ENCODE measurements at regions of chr19 and their contacts with region 1.

Region 1: DNA sequence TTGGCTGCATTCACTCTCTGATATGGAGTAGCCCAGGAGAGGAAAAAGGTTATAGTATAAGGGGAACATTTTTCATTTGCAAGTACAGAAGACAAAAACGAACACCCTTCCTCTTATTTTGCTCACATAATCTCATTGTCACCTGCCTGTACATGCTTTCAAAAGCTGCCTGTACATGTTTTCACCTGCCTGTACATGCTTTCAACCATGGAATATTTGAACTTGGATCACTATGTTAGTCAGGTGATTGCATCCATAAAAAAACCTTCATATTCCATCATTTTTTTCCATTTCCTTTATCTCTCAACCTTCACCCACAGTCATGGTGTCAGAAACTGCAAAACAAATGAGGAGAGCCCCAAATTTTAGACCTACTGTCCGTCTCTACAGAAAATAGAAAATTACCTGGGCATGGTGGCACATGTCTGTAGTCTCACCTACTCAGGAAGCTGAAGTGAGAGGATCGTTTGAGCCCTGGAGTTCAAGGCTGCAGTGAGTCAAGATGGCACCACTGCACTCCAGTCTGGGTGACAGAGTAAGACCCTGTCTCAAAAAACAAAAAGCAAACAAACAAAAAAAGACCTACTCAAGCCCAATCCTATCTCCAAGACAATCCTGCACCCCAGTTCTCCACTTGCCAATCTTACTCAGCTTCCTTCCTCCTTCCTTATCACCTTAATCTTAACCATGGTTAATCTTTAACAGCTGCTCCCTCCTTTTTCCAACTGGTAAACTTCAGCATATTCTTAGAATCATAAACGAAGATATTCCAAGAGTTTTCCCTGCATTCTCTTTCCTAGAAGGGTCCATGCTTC is 11.6 kb downstream of the IGFL2 start:
- DNase-seq: no peak
- ATAC-seq: no peak
- H3K4me3 ChIP-seq: no peak overlapping the region
- H3K27ac ChIP-seq: no peak overlapping the region
- H3K4me1 ChIP-seq: no peaks in the 10 kb centered on the region
- H3K27me3 ChIP-seq: no peaks in the 10 kb centered on the region; a peak in 1 of 4 replicates
- CTCF ChIP-seq: no peak
- EP300 ChIP-seq: no peak
- POLR2A ChIP-seq: no peak
- RAD21 ChIP-seq: no peak

Region 2: DNA sequence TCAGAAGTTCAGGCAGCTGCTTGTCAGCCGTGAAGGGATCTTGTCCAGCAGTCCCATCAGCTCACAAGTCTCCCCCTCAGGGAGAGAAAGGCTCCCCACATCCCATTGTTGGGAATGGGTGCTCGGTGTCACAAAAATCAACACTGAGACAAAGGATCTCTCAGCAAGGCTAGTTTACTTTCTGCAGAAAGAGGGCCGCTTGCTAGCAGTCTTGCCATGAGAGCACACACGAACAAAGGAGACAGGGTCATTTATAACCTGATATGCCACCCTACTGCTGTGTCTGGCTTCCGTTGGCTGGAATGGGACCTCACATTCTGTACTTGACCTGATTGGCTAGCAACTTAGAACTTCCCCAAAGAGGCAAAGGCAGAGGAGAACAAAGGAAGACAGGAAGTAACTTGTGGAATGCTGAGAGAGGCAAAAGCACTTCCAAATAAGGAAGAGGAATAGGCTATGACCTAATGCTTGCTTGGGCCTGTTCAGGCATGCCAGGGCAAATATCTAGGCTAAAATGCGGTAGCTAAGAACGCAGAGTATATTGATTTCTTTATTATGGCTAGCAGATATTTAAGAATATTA is 26.4 kb before region 1 on chr19:
- CTCF ChIA-PET with region 1: no interaction called
- POLR2A ChIA-PET with region 1: no interaction called
- RAD21 ChIA-PET with region 1: no interaction called
- SMC1A ChIA-PET with region 1: no interaction called
- in situ Hi-C with region 1: no loop called
- intact Hi-C with region 1: no loop called
- DNase-seq: peak; percentile 24
- ATAC-seq: no peak
- H3K4me3 ChIP-seq: no peak overlapping the region
- H3K27ac ChIP-seq: no peak overlapping the region; the same call in 1 of the 2 replicates
- H3K4me1 ChIP-seq: peaks cover 3% of the 10 kb centered on the region; the same call in 1 of the 2 replicates
- H3K27me3 ChIP-seq: peaks cover 0 to under 1% of the 10 kb centered on the region in 2 experiments; a peak in 1 of 4 replicates
- CTCF ChIP-seq: no peak
- EP300 ChIP-seq: no peak
- POLR2A ChIP-seq: no peak
- RAD21 ChIP-seq: no peak

Region 3: DNA sequence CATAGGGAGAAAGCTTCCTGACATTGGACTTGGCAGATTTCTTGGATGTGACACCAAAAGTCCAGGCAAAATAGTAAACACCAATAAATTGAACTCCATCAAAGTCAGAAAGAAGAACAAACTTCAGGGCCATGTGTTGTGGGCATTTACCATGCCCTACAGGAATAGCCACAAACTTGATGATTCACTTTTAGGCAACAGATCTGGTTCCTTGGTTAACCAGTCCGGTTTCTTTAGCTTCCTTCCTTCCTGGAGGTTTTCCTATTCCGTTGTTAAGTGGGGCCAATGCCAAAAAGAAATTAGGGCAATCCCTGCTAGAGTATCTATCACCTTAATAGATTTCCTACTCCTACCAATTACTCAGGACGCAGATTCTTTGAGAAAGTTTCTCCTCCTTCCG is 95.2 kb after region 1 on chr19:
- CTCF ChIA-PET with region 1: no interaction called
- POLR2A ChIA-PET with region 1: no interaction called
- RAD21 ChIA-PET with region 1: no interaction called
- SMC1A ChIA-PET with region 1: no interaction called
- in situ Hi-C with region 1: loop called (anchors 5 kb)
- intact Hi-C with region 1: no loop called
- DNase-seq: no peak
- ATAC-seq: no peak
- H3K4me3 ChIP-seq: no peak overlapping the region
- H3K27ac ChIP-seq: no peak overlapping the region
- H3K4me1 ChIP-seq: no peaks in the 10 kb centered on the region
- H3K27me3 ChIP-seq: no peaks in the 10 kb centered on the region
- CTCF ChIP-seq: no peak
- EP300 ChIP-seq: no peak
- POLR2A ChIP-seq: no peak
- RAD21 ChIP-seq: no peak

Measured in GM12878 (cell line).